Breast epithelium (tissue), 4 donors: ENCODE measurements at regions of chr14 and their contacts with region 1.

Region 1: GRCh38 chr14:35352266-35353233 is 52.0 kb downstream of the NFKBIA start:
- DNase-seq: no peak
- H3K4me3 ChIP-seq: no peak overlapping the region
- H3K27ac ChIP-seq: peak overlapping the region in 1 of 2 donors; percentile 56
- H3K4me1 ChIP-seq: no peaks in the 10 kb centered on the region
- H3K27me3 ChIP-seq: no peaks in the 10 kb centered on the region
- CTCF ChIP-seq: no peak
- POLR2A ChIP-seq: no peak

Region 2: GRCh38 chr14:34502494-34503225 is 849.9 kb before region 1 on chr14:
- intact Hi-C with region 1: loop called (anchors 5 kb)
- DNase-seq: no peak
- H3K4me3 ChIP-seq: no peak overlapping the region
- H3K27ac ChIP-seq: no peak overlapping the region
- H3K4me1 ChIP-seq: peaks cover 0 to 2% of the 10 kb centered on the region in 2 donors
- H3K27me3 ChIP-seq: no peaks in the 10 kb centered on the region
- CTCF ChIP-seq: no peak
- POLR2A ChIP-seq: no peak